Activated naive CD4-positive, alpha-beta T cell treated with anti-CD3 and anti-CD28 coated beads, Interleukin-2, amount 10 ng/mL, durations not matched to agents 7 days and 5 days (primary cell): ENCODE measurements at regions of chr12 and their contacts with region 1.

Region 1: GRCh38 chr12:57276935-57277563 is 26.1 kb upstream of the STAC3 start:
- DNase-seq: peak; percentile 44
- H3K4me3 Mint-ChIP-seq: no peak overlapping the region
- H3K27ac Mint-ChIP-seq: peak overlapping the region; percentile 42
- H3K4me1 Mint-ChIP-seq: peaks cover 20% of the 10 kb centered on the region
- H3K27me3 Mint-ChIP-seq: no peaks in the 10 kb centered on the region

Region 2: GRCh38 chr12:57190037-57190436 is 87.0 kb before region 1 on chr12:
- CTCF ChIA-PET with region 1: no interaction called
- DNase-seq: no peak
- H3K4me3 Mint-ChIP-seq: no peak overlapping the region
- H3K27ac Mint-ChIP-seq: no peak overlapping the region
- H3K4me1 Mint-ChIP-seq: no peaks in the 10 kb centered on the region
- H3K27me3 Mint-ChIP-seq: peaks cover 3% of the 10 kb centered on the region

Region 3: GRCh38 chr12:57263096-57263495 is 14.0 kb before region 1 on chr12:
- CTCF ChIA-PET with region 1: interaction called, 10 read pairs
- DNase-seq: no peak
- H3K4me3 Mint-ChIP-seq: no peak overlapping the region
- H3K27ac Mint-ChIP-seq: no peak overlapping the region
- H3K4me1 Mint-ChIP-seq: peaks cover 4% of the 10 kb centered on the region
- H3K27me3 Mint-ChIP-seq: no peaks in the 10 kb centered on the region